PC-9 (cell line): ENCODE measurements at regions of chr4 and their contacts with region 1.

Region 1: GRCh38 chr4:90184575-90184974 is 57.4 kb downstream of the CCSER1 start:
- DNase-seq: peak; percentile 3 to 45
- H3K4me3 ChIP-seq: no peak overlapping the region
- H3K27ac ChIP-seq: no peak overlapping the region
- H3K4me1 ChIP-seq: no peaks in the 10 kb centered on the region
- H3K27me3 ChIP-seq: no peaks in the 10 kb centered on the region
- CTCF ChIP-seq: no peak

Region 2: GRCh38 chr4:90099812-90100211 is 84.8 kb before region 1 on chr4:
- CTCF ChIA-PET with region 1: no interaction called
- POLR2A ChIA-PET with region 1: no interaction called
- intact Hi-C with region 1: loop called (anchors 1 kb)
- DNase-seq: peak in 1 of 2 experiments; percentile 9
- H3K4me3 ChIP-seq: no peak overlapping the region
- H3K27ac ChIP-seq: no peak overlapping the region
- H3K4me1 ChIP-seq: no peaks in the 10 kb centered on the region
- H3K27me3 ChIP-seq: no peaks in the 10 kb centered on the region
- CTCF ChIP-seq: no peak